OCI-LY7 (cell line): ENCODE measurements at regions of chr6 and their contacts with region 1.

Region 1: GRCh38 chr6:148578245-148578732 is 168.5 kb upstream of the UST start:
- DNase-seq: peak; percentile 69
- H3K4me3 ChIP-seq: no peak overlapping the region
- H3K27ac ChIP-seq: no peak overlapping the region
- H3K4me1 ChIP-seq: no peaks in the 10 kb centered on the region
- CTCF ChIP-seq: peak; percentile 93

Region 2: GRCh38 chr6:147449405-147450161 is 1128.7 kb before region 1 on chr6:
- CTCF ChIA-PET with region 1: no interaction called
- POLR2A ChIA-PET with region 1: no interaction called
- intact Hi-C with region 1: no loop called
- DNase-seq: no peak
- H3K4me3 ChIP-seq: no peak overlapping the region
- H3K27ac ChIP-seq: no peak overlapping the region
- H3K4me1 ChIP-seq: no peaks in the 10 kb centered on the region
- CTCF ChIP-seq: no peak

Region 3: GRCh38 chr6:148177589-148178233 is 400.6 kb before region 1 on chr6:
- CTCF ChIA-PET with region 1: no interaction called
- POLR2A ChIA-PET with region 1: no interaction called
- intact Hi-C with region 1: no loop called
- DNase-seq: peak; percentile 6
- H3K4me3 ChIP-seq: no peak overlapping the region
- H3K27ac ChIP-seq: no peak overlapping the region
- H3K4me1 ChIP-seq: no peaks in the 10 kb centered on the region
- CTCF ChIP-seq: peak; percentile 76

Region 4: DNA sequence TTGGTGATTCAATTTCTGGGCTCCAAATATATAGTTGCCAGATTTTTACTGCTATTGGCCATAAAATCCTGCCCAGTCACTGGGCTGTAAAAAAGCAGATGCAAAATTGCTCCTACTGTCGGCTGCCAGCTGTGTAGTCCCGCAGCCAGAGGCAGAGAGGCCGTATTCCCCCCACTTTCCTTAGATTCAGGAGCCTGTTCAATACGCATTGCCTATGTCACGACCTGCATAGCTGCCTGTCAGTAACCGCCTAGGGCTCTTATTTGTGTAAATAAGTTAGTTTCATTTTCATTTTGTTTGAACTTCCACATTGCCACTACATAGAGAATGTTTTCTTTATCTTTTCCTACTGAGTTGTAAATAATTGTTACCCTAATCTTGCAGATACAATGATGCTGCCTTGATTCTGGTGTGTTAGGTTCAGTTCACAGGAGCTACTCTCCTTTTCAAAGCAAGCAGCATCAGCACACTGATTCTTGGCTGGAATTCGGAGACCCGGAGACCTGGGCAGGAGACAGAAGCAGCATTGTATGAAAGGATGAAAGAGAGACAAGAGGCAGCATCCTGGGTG is 122.5 kb after region 1 on chr6:
- CTCF ChIA-PET with region 1: no interaction called
- POLR2A ChIA-PET with region 1: interaction called, 4 read pairs
- intact Hi-C with region 1: loop called (anchors 1 kb)
- DNase-seq: no peak
- H3K4me3 ChIP-seq: peak overlapping the region; percentile 34
- H3K27ac ChIP-seq: no peak overlapping the region
- H3K4me1 ChIP-seq: peaks cover 9% of the 10 kb centered on the region
- CTCF ChIP-seq: no peak

Region 5: DNA sequence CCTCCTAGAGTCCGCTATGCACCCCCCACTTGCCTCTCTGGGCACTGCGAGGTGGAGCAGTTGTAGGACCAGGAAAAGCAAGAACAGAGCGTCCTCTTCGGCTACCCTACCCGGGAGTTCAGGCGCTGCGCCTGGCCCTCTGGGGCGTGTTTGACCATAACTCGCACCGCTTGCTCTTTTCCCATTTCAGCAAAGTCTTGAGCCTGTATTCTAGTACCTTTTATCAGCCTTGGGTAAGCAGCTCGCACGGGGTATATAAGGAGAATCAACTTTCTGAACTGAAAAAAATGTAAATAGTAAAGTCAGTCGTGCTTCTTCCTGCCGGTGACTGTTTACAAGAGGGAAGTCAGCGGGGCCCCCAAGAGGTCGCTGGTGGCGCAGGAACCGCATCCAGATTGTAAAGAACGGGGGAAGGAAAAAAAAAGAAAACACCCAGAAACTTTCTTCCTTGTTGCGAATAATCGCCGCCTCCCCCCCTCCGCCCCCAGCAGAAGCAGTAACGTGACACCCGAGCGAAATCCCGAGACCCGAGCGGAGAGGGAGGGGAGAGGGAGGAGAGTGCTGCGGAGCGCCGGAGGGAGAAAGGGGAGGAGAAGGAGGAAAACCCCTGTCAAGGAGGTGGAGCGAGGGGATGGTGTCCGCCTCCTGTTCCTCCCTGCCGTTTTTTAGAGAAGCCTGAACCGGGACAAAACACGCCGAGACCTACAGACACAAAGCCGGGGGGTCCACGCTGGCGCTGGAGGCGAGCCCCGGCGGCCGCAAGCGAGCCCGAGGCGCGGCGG is 168.3 kb after region 1 on chr6 and contains the start of gene UST:
- CTCF ChIA-PET with region 1: no interaction called
- POLR2A ChIA-PET with region 1: no interaction called
- intact Hi-C with region 1: loop called (anchors 1 kb)
- DNase-seq: peak; percentile 83
- H3K4me3 ChIP-seq: peak within 1 kb of the TSS; percentile 84
- H3K27ac ChIP-seq: no peak within 1 kb of the TSS
- H3K4me1 ChIP-seq: peaks cover 14% of the 10 kb centered on the region
- CTCF ChIP-seq: peak; percentile 88
- total RNA-seq, gene UST: 0.59 and 1.4 TPM in 2 replicates